K562 (cell line): ENCODE measurements at regions of chr1 and their contacts with region 1.

Region 1: GRCh38 chr1:84620720-84621313 is 46.6 kb upstream of the CTBS start:
- DNase-seq: peak; percentile 88 to 93 (median 92)
- ATAC-seq: peak; percentile 97
- H3K4me3 ChIP-seq: peak overlapping the region; percentile 71
- H3K27ac ChIP-seq: peak overlapping the region; percentile 77
- H3K4me1 ChIP-seq: peaks cover 9 to 10% of the 10 kb centered on the region in 2 experiments
- H3K27me3 ChIP-seq: 0 out of 5 replicates have a peak, but pooled peaks cover 0 to 3% of the 10 kb centered on the region in 2 experiments
- CTCF ChIP-seq: peak; percentile 72 to 93 (median 89)
- EP300 ChIP-seq: no peak
- POLR2A ChIP-seq: peak; percentile 68
- RAD21 ChIP-seq: peak; percentile 84 to 85

Region 2: GRCh38 chr1:84298328-84298683 is 322.5 kb before region 1 on chr1:
- CTCF ChIA-PET with region 1: no interaction called
- POLR2A ChIA-PET with region 1: interaction called, 4 read pairs
- in situ Hi-C with region 1: loop called (anchors 10 kb)
- intact Hi-C with region 1: no loop called
- DNase-seq: peak; percentile 64 to 79 (median 72)
- ATAC-seq: peak; percentile 91
- H3K4me3 ChIP-seq: peak overlapping the region; percentile 69
- H3K27ac ChIP-seq: peak overlapping the region; percentile 83
- H3K4me1 ChIP-seq: peaks cover 14 to 31% of the 10 kb centered on the region in 2 experiments
- H3K27me3 ChIP-seq: no peaks in the 10 kb centered on the region
- CTCF ChIP-seq: no peak
- EP300 ChIP-seq: no peak
- POLR2A ChIP-seq: peak; percentile 83
- RAD21 ChIP-seq: no peak

Region 3: DNA sequence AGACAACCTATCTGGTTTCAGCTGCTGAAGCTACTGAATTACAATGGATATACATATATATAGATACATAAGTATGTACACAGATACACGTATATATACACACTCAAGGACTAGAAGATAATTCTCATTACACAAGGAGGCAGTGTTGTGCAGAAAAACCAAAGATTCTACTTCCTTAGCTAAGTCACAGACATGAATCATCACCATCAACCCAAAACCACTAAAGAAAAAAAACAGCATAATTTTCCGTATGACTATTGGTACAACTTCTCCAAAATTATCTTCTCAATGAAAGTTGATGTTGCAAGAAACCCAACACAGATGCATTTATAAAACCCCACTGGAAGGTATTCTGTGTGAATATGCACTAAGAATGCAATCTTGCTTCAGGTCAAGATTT is 178.6 kb before region 1 on chr1:
- CTCF ChIA-PET with region 1: interaction called, 17 read pairs
- POLR2A ChIA-PET with region 1: no interaction called
- in situ Hi-C with region 1: no loop called
- intact Hi-C with region 1: loop called (anchors 1 kb)
- DNase-seq: peak in 3 of 4 experiments; percentile 16 to 65 (median 34)
- ATAC-seq: peak; percentile 91
- H3K4me3 ChIP-seq: no peak overlapping the region
- H3K27ac ChIP-seq: no peak overlapping the region
- H3K4me1 ChIP-seq: no peaks in the 10 kb centered on the region; a peak in 1 of 5 replicates
- H3K27me3 ChIP-seq: no peaks in the 10 kb centered on the region
- CTCF ChIP-seq: peak; percentile 42 to 80 (median 52); a peak in 5 of 6 replicates
- EP300 ChIP-seq: no peak
- POLR2A ChIP-seq: no peak
- RAD21 ChIP-seq: peak; percentile 93 to 98

Region 4: GRCh38 chr1:84506002-84506728 is 114.7 kb before region 1 on chr1 and contains the starts of genes GNG5 and SPATA1:
- CTCF ChIA-PET with region 1: interaction called, 3 read pairs
- POLR2A ChIA-PET with region 1: interaction called, 4 read pairs
- in situ Hi-C with region 1: no loop called
- intact Hi-C with region 1: loop called (anchors 2 kb)
- DNase-seq: peak; percentile 95 to 98 (median 96)
- ATAC-seq: peak; percentile 90
- H3K4me3 ChIP-seq: peak within 1 kb of the TSS; percentile 69
- H3K27ac ChIP-seq: peak within 1 kb of the TSS; percentile 97
- H3K4me1 ChIP-seq: peaks cover 4 to 10% of the 10 kb centered on the region in 2 experiments; a peak in 4 of 5 replicates
- H3K27me3 ChIP-seq: no peaks in the 10 kb centered on the region
- CTCF ChIP-seq: no peak
- EP300 ChIP-seq: peak; percentile 61
- POLR2A ChIP-seq: peak; percentile 98
- RAD21 ChIP-seq: peak in 1 of 2 experiments; percentile 27; a peak in 2 of 4 replicates
- polyA plus RNA-seq, gene GNG5: 242 to 243 TPM
- polyA plus RNA-seq, gene SPATA1: 1.1 TPM

Region 5: DNA sequence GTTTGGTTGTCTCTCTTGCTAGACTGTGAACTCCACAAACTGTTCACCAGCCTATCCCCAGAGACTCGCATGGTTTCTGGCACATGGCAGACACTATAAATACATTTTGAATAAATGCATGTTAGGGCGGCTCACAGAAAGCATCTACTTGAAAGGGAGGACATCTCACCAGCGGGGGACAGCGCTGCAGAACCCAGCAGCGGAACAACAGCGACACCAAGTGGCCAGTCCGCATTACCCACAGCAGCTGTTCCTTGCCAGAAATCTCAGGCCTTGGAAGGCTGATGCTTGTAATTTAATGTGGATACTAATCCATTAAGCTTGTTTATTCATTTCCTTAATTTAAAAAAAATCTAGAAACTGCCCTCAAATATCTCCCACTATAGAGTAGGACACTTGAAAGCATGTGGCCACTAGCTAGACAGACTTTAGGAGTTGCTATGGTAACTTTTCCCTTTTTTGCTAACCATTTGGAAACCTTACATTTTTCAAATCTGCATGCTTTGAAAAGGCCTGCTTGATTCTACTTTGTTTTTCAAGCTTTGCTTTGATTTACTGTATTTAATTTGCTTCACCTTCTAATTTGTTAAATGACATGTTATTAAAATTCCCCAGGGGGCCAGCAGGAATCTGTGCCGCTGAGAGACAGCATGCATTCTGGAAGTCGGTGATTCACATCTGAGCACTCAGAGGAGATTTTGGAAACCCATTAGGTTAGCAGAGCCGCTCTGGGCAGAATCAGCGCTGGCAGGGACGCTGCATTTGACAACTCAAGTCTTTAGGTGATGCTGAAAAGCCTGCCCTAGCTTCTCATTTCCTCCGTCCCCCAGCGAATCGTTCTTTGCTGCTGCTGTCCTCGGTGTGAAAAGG is 132.9 kb after region 1 on chr1:
- CTCF ChIA-PET with region 1: interaction called, 3 read pairs
- POLR2A ChIA-PET with region 1: no interaction called
- in situ Hi-C with region 1: no loop called
- intact Hi-C with region 1: loop called (anchors 5 kb)
- DNase-seq: peak; percentile 66 to 78 (median 76)
- ATAC-seq: peak; percentile 94
- H3K4me3 ChIP-seq: no peak overlapping the region
- H3K27ac ChIP-seq: no peak overlapping the region
- H3K4me1 ChIP-seq: no peaks in the 10 kb centered on the region; a peak in 1 of 5 replicates
- H3K27me3 ChIP-seq: peaks cover 0 to 4% of the 10 kb centered on the region in 2 experiments; a peak in 2 of 5 replicates
- CTCF ChIP-seq: peak; percentile 95 to 97 (median 96)
- EP300 ChIP-seq: no peak
- POLR2A ChIP-seq: no peak
- RAD21 ChIP-seq: peak; percentile 95 to 98

Region 6: DNA sequence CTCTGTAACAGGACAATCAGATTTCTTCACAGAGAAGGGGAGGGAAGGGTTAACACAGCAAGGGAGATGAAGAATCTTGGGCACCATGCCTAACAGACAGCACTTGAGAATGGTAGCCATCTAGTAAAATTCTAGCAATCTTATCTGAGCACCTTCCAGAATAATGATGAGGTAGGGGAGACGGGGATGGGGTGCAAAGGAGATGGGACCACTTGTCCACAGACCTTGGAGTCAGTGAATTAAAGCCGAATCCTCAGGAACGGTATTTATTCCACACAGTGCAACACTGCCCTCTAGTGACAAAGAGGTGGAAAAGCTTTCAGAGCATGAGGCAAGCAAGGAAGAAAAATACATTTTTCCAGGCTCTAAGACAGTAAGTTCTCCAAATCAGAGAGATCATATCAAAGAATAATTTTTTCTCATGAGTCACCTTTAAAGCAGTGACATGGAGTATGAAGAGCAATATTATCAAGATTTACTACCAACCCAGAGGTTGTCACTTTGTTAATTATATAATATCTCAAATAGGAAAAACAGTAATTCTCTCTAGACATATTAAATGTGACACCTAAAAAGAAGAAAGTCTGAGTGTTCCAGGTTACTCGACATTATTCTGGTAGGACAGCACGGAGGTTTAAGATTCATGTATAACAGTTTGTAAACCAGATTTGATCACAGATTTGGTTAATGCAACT is 315.4 kb after region 1 on chr1:
- CTCF ChIA-PET with region 1: no interaction called
- POLR2A ChIA-PET with region 1: no interaction called
- in situ Hi-C with region 1: no loop called
- intact Hi-C with region 1: loop called (anchors 10 kb)
- DNase-seq: peak; percentile 60 to 71 (median 63)
- ATAC-seq: peak; percentile 88
- H3K4me3 ChIP-seq: no peak overlapping the region
- H3K27ac ChIP-seq: no peak overlapping the region
- H3K4me1 ChIP-seq: no peaks in the 10 kb centered on the region
- H3K27me3 ChIP-seq: peaks cover 13 to 18% of the 10 kb centered on the region in 2 experiments; a peak in 4 of 5 replicates
- CTCF ChIP-seq: peak; percentile 67 to 90 (median 87)
- EP300 ChIP-seq: no peak
- POLR2A ChIP-seq: no peak
- RAD21 ChIP-seq: peak; percentile 83 to 85